IMR-90 (cell line): ENCODE measurements at regions of chr14 and their contacts with region 1.

Region 1: GRCh38 chr14:102986810-102987579 is 64.5 kb downstream of the AMN start:
- DNase-seq: peak; percentile 90
- ATAC-seq: peak; percentile 82
- H3K4me3 ChIP-seq: no peak overlapping the region
- H3K27ac ChIP-seq: peak overlapping the region; percentile 87; the same call in 1 of the 2 replicates
- H3K4me1 ChIP-seq: peaks cover 10% of the 10 kb centered on the region
- H3K27me3 ChIP-seq: no peaks in the 10 kb centered on the region
- CTCF ChIP-seq: no peak
- POLR2A ChIP-seq: no peak
- RAD21 ChIP-seq: no peak

Region 2: DNA sequence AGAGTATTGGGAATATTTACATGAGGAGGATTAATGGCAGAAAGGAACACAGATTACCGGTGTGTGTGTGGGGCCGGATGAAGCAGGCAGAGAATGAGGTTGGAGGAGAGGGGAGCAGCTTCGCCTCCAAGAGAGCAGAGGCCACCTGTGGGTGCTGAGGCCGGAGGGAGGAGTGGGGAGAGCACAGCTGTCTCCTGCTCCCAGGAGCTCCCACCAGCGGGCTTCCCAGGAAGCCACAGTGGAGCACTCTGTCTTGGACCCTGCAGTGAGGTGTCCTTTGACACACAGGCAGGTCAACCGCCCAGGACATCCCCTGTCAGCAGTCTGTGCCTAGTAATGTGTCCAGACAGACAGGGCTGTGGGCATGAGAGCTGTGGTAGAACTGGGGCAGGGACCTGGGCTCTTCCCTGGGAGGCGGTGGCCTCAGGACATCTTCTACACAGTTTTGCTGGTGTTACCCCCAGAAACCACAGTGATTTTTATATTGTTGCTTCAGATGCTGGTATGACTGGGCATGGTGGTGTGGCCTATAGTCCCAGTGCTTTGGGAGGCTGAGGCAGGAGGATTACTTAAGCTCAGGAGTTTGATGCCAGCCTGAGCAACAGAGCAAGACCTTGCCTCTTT is 83.0 kb before region 1 on chr14:
- CTCF ChIA-PET with region 1: no interaction called
- POLR2A ChIA-PET with region 1: interaction called, 15 read pairs
- dilution Hi-C with region 1: no loop called
- in situ Hi-C with region 1: no loop called
- intact Hi-C with region 1: no loop called
- DNase-seq: no peak
- ATAC-seq: no peak
- H3K4me3 ChIP-seq: no peak overlapping the region
- H3K27ac ChIP-seq: no peak overlapping the region
- H3K4me1 ChIP-seq: no peaks in the 10 kb centered on the region
- H3K27me3 ChIP-seq: no peaks in the 10 kb centered on the region
- CTCF ChIP-seq: no peak
- POLR2A ChIP-seq: no peak
- RAD21 ChIP-seq: no peak